ENCODE measurements at regions of chr12 and their contacts with region 1.

Region 1: GRCh38 chr12:25058658-25059058 is 109.8 kb upstream of the BCAT1 start:
- DNase-seq: peak; percentile 58
- ATAC-seq: peak; percentile 42
- H3K4me3 ChIP-seq: peak overlapping the region; percentile 89
- H3K27ac ChIP-seq: peak overlapping the region; percentile 65
- H3K4me1 ChIP-seq: peaks cover 39% of the 10 kb centered on the region
- H3K27me3 ChIP-seq: no peaks in the 10 kb centered on the region
- CTCF ChIP-seq: no peak
- EP300 ChIP-seq: peak in 1 of 2 experiments; percentile 69; a peak in 1 of 4 replicates
- POLR2A ChIP-seq: no peak; the same call in 1 of the 2 replicates
- RAD21 ChIP-seq: no peak

Region 2: DNA sequence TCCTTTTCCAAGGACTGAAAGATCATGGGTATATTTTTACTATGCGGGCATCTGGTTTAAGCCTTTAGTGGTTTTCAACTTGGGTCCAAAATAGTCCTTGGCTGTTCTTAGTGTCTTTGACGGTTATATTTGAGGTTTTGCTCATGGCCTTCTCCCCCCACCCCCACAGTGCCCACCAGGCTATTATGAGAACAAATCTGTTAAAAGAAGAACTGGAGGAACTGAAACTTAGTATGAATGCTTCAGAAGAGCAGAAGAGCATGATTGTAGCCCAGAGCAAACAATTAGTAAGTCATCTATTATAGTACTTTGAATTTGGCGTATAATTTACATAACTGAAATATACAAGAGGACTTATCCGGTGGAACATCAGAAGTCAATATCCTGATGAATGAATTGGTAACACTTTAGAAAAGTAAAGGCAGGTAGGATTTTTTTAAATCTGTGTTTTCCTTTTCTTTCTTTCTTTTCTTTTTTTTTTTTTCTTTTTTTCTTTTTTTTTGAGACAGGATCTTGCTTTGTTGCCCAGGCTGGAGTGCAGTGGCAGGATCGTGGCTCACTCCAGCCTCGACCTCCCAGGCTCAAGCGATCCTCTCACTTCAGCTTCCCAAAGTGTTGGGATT is 37.9 kb before region 1 on chr12:
- CTCF ChIA-PET with region 1: interaction called, 14 read pairs
- POLR2A ChIA-PET with region 1: interaction called, 39 read pairs
- RAD21 ChIA-PET with region 1: interaction called, 61 read pairs
- SMC1A ChIA-PET with region 1: interaction called, 74 read pairs
- in situ Hi-C with region 1: no loop called
- intact Hi-C with region 1: no loop called
- DNase-seq: peak; percentile 79
- ATAC-seq: peak; percentile 94
- H3K4me3 ChIP-seq: peak overlapping the region; percentile 49; the same call in 1 of the 2 replicates
- H3K27ac ChIP-seq: peak overlapping the region; percentile 76
- H3K4me1 ChIP-seq: peaks cover 35% of the 10 kb centered on the region
- H3K27me3 ChIP-seq: no peaks in the 10 kb centered on the region
- CTCF ChIP-seq: no peak
- EP300 ChIP-seq: peak; percentile 93 to 98
- POLR2A ChIP-seq: no peak
- RAD21 ChIP-seq: no peak; the same call in 1 of the 2 replicates

Region 3: GRCh38 chr12:25074954-25075353 is 16.3 kb after region 1 on chr12:
- CTCF ChIA-PET with region 1: interaction called, 7 read pairs
- POLR2A ChIA-PET with region 1: interaction called, 8 read pairs
- RAD21 ChIA-PET with region 1: interaction called, 7 read pairs
- SMC1A ChIA-PET with region 1: interaction called, 41 read pairs
- in situ Hi-C with region 1: no loop called
- intact Hi-C with region 1: no loop called
- DNase-seq: no peak
- ATAC-seq: peak; percentile 62
- H3K4me3 ChIP-seq: peak overlapping the region; percentile 15; the same call in 1 of the 2 replicates
- H3K27ac ChIP-seq: no peak overlapping the region
- H3K4me1 ChIP-seq: peaks cover 33% of the 10 kb centered on the region
- H3K27me3 ChIP-seq: no peaks in the 10 kb centered on the region
- CTCF ChIP-seq: no peak
- EP300 ChIP-seq: peak; percentile 19 to 39; a peak in 2 of 4 replicates
- POLR2A ChIP-seq: no peak
- RAD21 ChIP-seq: no peak

Region 4: GRCh38 chr12:25107920-25108319 is 49.3 kb after region 1 on chr12:
- CTCF ChIA-PET with region 1: interaction called, 14 read pairs
- POLR2A ChIA-PET with region 1: interaction called, 5 read pairs
- RAD21 ChIA-PET with region 1: interaction called, 22 read pairs
- SMC1A ChIA-PET with region 1: interaction called, 10 read pairs
- in situ Hi-C with region 1: no loop called
- intact Hi-C with region 1: no loop called
- DNase-seq: peak; percentile 64
- ATAC-seq: peak; percentile 86
- H3K4me3 ChIP-seq: no peak overlapping the region
- H3K27ac ChIP-seq: peak overlapping the region; percentile 60
- H3K4me1 ChIP-seq: peaks cover 16% of the 10 kb centered on the region
- H3K27me3 ChIP-seq: no peaks in the 10 kb centered on the region
- CTCF ChIP-seq: no peak
- EP300 ChIP-seq: peak; percentile 33 to 95; a peak in 3 of 4 replicates
- POLR2A ChIP-seq: no peak
- RAD21 ChIP-seq: no peak